Ascending aorta (tissue), 2 donors: ENCODE measurements at regions of chr9 and their contacts with region 1.

Region 1: GRCh38 chr9:107489687-107490605 is at the start of gene KLF4:
- DNase-seq: peak; percentile 63 to 95
- H3K4me3 ChIP-seq: peak within 1 kb of the TSS; percentile 95
- H3K27ac ChIP-seq: peak within 1 kb of the TSS; percentile 92 to 96
- H3K4me1 ChIP-seq: peaks cover 0 to 22% of the 10 kb centered on the region in 2 donors
- H3K27me3 ChIP-seq: no peaks in the 10 kb centered on the region
- CTCF ChIP-seq: no peak
- total RNA-seq, gene KLF4: 444 TPM

Region 2: GRCh38 chr9:106305428-106306133 is 1184.4 kb before region 1 on chr9:
- intact Hi-C with region 1: no loop called
- DNase-seq: no peak
- H3K4me3 ChIP-seq: no peak overlapping the region
- H3K27ac ChIP-seq: no peak overlapping the region
- H3K4me1 ChIP-seq: no peaks in the 10 kb centered on the region
- H3K27me3 ChIP-seq: no peaks in the 10 kb centered on the region
- CTCF ChIP-seq: no peak

Region 3: DNA sequence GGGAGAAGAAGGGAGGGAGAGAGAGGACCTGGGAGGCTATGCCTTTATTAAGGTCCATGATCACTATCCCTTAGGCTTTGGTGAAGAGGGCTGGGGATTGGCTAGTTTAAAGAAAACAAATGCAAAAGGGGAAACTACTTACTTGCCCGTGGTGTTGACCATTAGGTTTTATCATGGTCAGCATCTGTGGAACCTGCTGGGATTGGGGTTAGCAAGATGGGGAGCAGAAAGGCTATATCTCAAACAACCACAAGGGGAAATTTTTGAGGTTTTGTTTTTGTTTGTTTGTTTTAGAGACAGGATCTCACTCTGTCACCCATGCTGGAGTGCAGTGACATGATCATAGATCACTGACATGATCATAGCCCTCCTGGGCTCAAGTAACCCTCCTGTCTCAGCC is 215.8 kb before region 1 on chr9:
- intact Hi-C with region 1: no loop called
- DNase-seq: no peak
- H3K4me3 ChIP-seq: no peak overlapping the region
- H3K27ac ChIP-seq: no peak overlapping the region
- H3K4me1 ChIP-seq: no peaks in the 10 kb centered on the region
- H3K27me3 ChIP-seq: no peaks in the 10 kb centered on the region
- CTCF ChIP-seq: no peak

Region 4: GRCh38 chr9:107425101-107426045 is 64.6 kb before region 1 on chr9:
- intact Hi-C with region 1: no loop called
- DNase-seq: peak; percentile 42 to 94
- H3K4me3 ChIP-seq: peak overlapping the region; percentile 18 to 53
- H3K27ac ChIP-seq: peak overlapping the region; percentile 48 to 50
- H3K4me1 ChIP-seq: peaks cover 0 to 7% of the 10 kb centered on the region in 2 donors
- H3K27me3 ChIP-seq: no peaks in the 10 kb centered on the region
- CTCF ChIP-seq: peak; percentile 71 to 95 (median 94)

Region 5: DNA sequence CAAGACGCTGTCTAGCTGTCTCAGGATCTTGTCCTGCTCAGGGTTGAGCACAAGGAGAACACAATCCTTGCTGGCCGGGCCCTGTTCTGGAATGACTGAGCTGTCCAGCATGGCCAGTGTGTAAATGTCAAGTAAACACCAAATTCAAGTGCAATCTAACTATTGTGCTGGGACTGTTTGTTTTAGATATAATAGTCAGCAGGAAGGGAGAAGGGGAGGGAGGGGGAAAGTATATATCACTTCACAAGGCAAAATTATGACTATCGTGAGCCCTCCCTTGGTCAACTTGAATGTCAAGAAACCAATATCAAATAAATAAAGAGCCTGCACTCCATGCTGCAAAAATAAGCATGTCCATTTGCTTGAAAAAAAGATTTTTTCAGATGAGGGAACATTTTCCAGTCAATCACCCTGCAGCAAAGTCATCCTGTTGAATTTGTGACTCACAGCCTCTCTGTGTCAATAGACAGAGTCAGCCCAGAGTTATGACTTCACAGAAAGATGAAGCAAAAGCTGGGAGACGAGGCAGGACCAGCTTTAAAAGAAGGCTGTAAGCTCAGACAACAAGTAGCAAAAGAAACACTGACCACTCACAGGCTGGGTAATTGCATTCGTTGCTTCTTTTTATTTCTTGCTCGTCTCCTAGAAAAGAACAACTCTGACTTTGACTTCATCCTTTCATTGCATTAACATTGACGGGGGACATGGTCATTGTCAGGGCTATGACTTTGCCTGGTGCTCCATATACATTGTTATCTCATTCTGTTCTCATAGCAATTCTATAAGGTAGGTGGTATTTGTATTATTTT is 14.8 kb after region 1 on chr9:
- intact Hi-C with region 1: loop called (anchors 1 kb)
- DNase-seq: peak in 1 of 2 donors; percentile 81
- H3K4me3 ChIP-seq: no peak overlapping the region
- H3K27ac ChIP-seq: peak overlapping the region; percentile 73 to 83
- H3K4me1 ChIP-seq: peaks cover 0 to 10% of the 10 kb centered on the region in 2 donors
- H3K27me3 ChIP-seq: no peaks in the 10 kb centered on the region
- CTCF ChIP-seq: no peak

Region 6: GRCh38 chr9:107749787-107750444 is 260.0 kb after region 1 on chr9:
- intact Hi-C with region 1: loop called (anchors 1 kb)
- DNase-seq: peak; percentile 86 to 96
- H3K4me3 ChIP-seq: no peak overlapping the region
- H3K27ac ChIP-seq: peak overlapping the region; percentile 92 to 95
- H3K4me1 ChIP-seq: peaks cover 22 to 31% of the 10 kb centered on the region in 2 donors
- H3K27me3 ChIP-seq: no peaks in the 10 kb centered on the region
- CTCF ChIP-seq: no peak

Region 7: DNA sequence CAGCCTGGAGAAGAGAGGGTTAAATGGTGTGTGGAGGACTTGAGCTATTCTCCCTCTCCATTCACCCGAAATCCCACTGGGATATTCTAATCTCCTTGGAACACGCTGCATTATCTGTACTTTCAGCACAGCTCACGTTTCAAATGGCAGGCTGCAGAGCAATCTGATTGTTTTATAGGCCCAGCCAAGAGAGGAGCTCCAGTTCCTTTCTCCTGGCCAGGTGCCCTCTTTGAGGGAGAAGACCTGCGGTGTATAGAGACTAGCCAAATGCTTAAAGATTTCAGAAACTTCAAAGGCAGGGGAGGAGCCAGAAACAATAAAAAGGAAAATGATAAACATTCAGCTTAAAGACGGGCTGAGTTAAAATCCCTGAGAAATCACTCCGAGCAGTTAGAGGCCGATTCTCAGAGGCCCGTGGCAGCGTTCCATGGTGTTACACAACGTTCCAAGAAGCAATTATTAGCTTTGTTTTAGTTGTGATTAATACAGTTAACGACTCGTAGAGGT is 563.7 kb after region 1 on chr9:
- intact Hi-C with region 1: loop called (anchors 5 kb)
- DNase-seq: peak in 1 of 2 donors; percentile 79
- H3K4me3 ChIP-seq: peak overlapping the region in 1 of 2 donors; percentile 17
- H3K27ac ChIP-seq: peak overlapping the region; percentile 40 to 49
- H3K4me1 ChIP-seq: peaks cover 0 to 18% of the 10 kb centered on the region in 2 donors
- H3K27me3 ChIP-seq: no peaks in the 10 kb centered on the region
- CTCF ChIP-seq: no peak

Region 8: GRCh38 chr9:108444400-108445358 is 954.7 kb after region 1 on chr9:
- intact Hi-C with region 1: loop called (anchors 10 kb)
- DNase-seq: peak; percentile 10 to 75
- H3K4me3 ChIP-seq: peak overlapping the region in 1 of 2 donors; percentile 16
- H3K27ac ChIP-seq: peak overlapping the region; percentile 63 to 69
- H3K4me1 ChIP-seq: peaks cover 0 to 37% of the 10 kb centered on the region in 2 donors
- H3K27me3 ChIP-seq: no peaks in the 10 kb centered on the region
- CTCF ChIP-seq: no peak